PC-3 (cell line): ENCODE measurements at regions of chr4 and their contacts with region 1.

Region 1: GRCh38 chr4:61468091-61468720 is 268.1 kb downstream of the ADGRL3 start:
- DNase-seq: peak; percentile 99
- ATAC-seq: peak; percentile 99
- H3K4me3 ChIP-seq: peak overlapping the region; percentile 11; the same call in 1 of the 2 replicates
- H3K27ac ChIP-seq: peak overlapping the region; percentile 80
- H3K4me1 ChIP-seq: peaks cover 39% of the 10 kb centered on the region
- H3K27me3 ChIP-seq: no peaks in the 10 kb centered on the region
- CTCF ChIP-seq: no peak

Region 2: GRCh38 chr4:61374447-61374891 is 93.7 kb before region 1 on chr4:
- CTCF ChIA-PET with region 1: no interaction called
- POLR2A ChIA-PET with region 1: no interaction called
- intact Hi-C with region 1: loop called (anchors 10 kb)
- DNase-seq: peak; percentile 50
- ATAC-seq: peak; percentile 22; the same call in 1 of the 2 replicates
- H3K4me3 ChIP-seq: no peak overlapping the region
- H3K27ac ChIP-seq: peak overlapping the region; percentile 7; the same call in 1 of the 2 replicates
- H3K4me1 ChIP-seq: peaks cover 24% of the 10 kb centered on the region
- H3K27me3 ChIP-seq: no peaks in the 10 kb centered on the region
- CTCF ChIP-seq: no peak

Region 3: GRCh38 chr4:61511716-61512488 is 43.7 kb after region 1 on chr4:
- CTCF ChIA-PET with region 1: no interaction called
- POLR2A ChIA-PET with region 1: no interaction called
- intact Hi-C with region 1: loop called (anchors 1 kb)
- DNase-seq: peak; percentile 88
- ATAC-seq: peak; percentile 83
- H3K4me3 ChIP-seq: 0 out of 2 replicates have a peak overlapping the region, but pooled peaks have one; percentile 22
- H3K27ac ChIP-seq: peak overlapping the region; percentile 52
- H3K4me1 ChIP-seq: peaks cover 20% of the 10 kb centered on the region
- H3K27me3 ChIP-seq: no peaks in the 10 kb centered on the region
- CTCF ChIP-seq: no peak

Region 4: DNA sequence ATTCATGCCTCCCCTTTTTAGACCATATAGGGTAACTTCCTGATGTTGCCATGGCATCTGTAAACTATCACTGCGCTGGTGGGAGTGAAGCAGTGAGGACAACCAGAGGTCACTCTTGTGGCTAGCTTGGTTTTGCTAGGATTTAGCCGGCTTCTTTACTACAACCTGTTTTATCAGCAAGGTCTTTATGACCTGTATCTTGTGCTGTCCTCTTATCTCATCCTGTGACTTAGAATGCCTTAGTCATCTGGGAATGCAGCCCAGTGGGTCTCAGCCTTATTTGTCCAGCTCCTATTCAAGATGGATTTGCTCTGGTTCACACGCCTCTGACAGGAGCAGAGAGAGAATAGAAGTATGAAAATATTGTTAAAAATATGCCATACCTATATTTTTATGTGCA is 87.6 kb after region 1 on chr4:
- CTCF ChIA-PET with region 1: no interaction called
- POLR2A ChIA-PET with region 1: no interaction called
- intact Hi-C with region 1: no loop called
- DNase-seq: peak; percentile 71
- ATAC-seq: peak; percentile 86
- H3K4me3 ChIP-seq: no peak overlapping the region
- H3K27ac ChIP-seq: peak overlapping the region; percentile 44
- H3K4me1 ChIP-seq: peaks cover 16% of the 10 kb centered on the region
- H3K27me3 ChIP-seq: no peaks in the 10 kb centered on the region
- CTCF ChIP-seq: no peak